ENCODE measurements at regions of chr6 and their contacts with region 1.

Region 1: DNA sequence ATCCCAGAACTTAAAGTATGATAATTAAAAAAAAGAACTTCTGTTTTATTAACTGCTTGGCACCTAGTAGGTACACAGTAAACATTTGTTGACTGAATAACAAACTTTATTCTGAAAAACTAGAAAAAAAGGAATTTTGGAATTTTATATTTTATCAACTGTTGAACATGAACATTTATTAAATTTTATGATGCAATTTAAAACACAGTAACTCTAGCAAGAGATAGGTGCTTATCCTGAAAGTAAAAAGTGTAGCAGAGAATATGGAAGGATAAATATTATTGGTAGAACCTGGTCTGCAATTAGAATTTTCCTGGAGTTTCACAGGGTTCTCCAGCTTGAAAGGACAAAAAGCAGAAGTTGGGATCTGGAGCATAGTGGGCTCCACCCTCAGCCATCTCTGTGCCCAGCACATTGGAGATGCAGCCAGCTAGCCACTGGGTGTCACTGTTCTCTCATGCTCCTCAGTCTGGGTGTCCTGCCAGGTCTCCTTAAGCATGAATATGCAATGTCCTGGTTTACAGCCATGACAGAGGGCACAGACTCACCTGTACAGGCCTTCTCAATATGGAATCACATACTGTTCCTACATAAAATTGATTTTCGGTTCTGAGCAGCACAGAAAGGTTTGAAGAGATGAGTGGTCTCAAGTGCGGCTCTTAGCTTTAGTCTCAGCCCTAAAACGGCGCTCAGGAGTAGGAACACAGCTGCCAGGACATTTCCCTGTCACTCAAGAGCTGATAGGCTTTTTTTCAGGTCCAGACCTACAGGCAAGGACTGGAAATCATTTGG is 31.7 kb upstream of the IL20RA start:
- DNase-seq: peak; percentile 79
- H3K4me3 Mint-ChIP-seq: no peak overlapping the region
- H3K27ac Mint-ChIP-seq: no peak overlapping the region
- H3K4me1 Mint-ChIP-seq: no peaks in the 10 kb centered on the region
- H3K27me3 Mint-ChIP-seq: peaks cover 20% of the 10 kb centered on the region

Region 2: GRCh38 chr6:136967876-136968752 is 108.4 kb before region 1 on chr6:
- CTCF ChIA-PET with region 1: no interaction called
- intact Hi-C with region 1: loop called (anchors 1 kb)
- DNase-seq: peak; percentile 80
- H3K4me3 Mint-ChIP-seq: no peak overlapping the region
- H3K27ac Mint-ChIP-seq: no peak overlapping the region
- H3K4me1 Mint-ChIP-seq: no peaks in the 10 kb centered on the region
- H3K27me3 Mint-ChIP-seq: peaks cover 10% of the 10 kb centered on the region

Region 3: DNA sequence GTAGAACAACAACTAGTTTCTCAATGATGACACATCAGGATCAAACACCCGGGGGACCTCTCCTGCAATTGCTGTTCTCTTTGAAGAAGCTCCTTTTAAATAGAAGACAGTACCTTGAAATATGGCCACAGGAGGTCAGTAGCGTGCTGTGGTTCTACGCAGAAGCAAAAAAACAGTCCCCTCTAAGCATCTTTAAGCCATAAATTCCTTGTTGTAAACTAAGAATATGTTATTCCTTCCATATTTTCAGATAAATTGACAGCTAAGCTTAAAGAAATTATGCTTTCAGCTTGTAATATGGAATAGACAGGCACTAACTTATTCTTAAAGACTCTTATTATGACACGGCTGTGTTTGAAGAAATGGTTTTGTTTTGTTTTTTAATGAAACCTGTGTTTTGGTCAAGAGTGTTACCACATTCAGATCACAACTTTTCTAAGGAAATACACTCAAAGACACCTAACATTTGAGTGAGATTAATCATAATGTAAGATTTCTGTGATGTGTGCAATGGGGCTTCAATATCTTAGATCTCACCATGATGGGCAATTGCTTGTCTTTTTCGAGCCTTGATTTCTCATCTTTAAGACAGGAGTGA is 18.0 kb after region 1 on chr6:
- CTCF ChIA-PET with region 1: interaction called, 6 read pairs
- intact Hi-C with region 1: loop called (anchors 1 kb)
- DNase-seq: peak; percentile 75
- H3K4me3 Mint-ChIP-seq: no peak overlapping the region
- H3K27ac Mint-ChIP-seq: no peak overlapping the region
- H3K4me1 Mint-ChIP-seq: peaks cover 13% of the 10 kb centered on the region
- H3K27me3 Mint-ChIP-seq: peaks cover 3% of the 10 kb centered on the region

Region 4: DNA sequence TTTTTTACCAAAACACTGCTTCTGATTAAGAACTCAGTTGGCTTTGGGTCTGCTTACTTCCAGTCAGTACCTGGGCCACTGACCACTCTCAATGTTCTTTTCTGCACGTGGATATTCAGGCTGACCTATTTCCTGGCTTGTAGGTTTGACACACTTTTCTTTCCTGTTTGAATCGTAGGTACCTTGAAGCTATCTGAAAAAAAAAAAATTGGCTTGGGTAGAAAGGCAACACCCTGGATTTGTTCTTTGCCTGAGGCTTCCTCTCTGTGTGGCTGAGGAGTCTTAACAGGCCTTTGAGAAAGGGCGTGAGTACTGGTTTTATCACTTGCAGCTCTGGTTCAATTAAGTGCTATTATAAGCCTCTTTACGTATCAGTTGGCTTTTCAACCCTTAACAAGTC is 28.9 kb after region 1 on chr6:
- CTCF ChIA-PET with region 1: no interaction called
- intact Hi-C with region 1: no loop called
- DNase-seq: no peak
- H3K4me3 Mint-ChIP-seq: no peak overlapping the region
- H3K27ac Mint-ChIP-seq: no peak overlapping the region
- H3K4me1 Mint-ChIP-seq: peaks cover 6% of the 10 kb centered on the region
- H3K27me3 Mint-ChIP-seq: no peaks in the 10 kb centered on the region

Region 5: GRCh38 chr6:137271245-137272183 is 195.0 kb after region 1 on chr6:
- CTCF ChIA-PET with region 1: interaction called, 3 read pairs
- intact Hi-C with region 1: loop called (anchors 5 kb)
- DNase-seq: no peak
- H3K4me3 Mint-ChIP-seq: no peak overlapping the region
- H3K27ac Mint-ChIP-seq: no peak overlapping the region
- H3K4me1 Mint-ChIP-seq: no peaks in the 10 kb centered on the region
- H3K27me3 Mint-ChIP-seq: peaks cover 9% of the 10 kb centered on the region

Measured in activated naive CD4-positive, alpha-beta T cell treated with anti-CD3 and anti-CD28 coated beads for 36 hours (primary cell).